Pancreas (tissue), 10 donors: ENCODE measurements at regions of chr1 and their contacts with region 1.

Region 1: DNA sequence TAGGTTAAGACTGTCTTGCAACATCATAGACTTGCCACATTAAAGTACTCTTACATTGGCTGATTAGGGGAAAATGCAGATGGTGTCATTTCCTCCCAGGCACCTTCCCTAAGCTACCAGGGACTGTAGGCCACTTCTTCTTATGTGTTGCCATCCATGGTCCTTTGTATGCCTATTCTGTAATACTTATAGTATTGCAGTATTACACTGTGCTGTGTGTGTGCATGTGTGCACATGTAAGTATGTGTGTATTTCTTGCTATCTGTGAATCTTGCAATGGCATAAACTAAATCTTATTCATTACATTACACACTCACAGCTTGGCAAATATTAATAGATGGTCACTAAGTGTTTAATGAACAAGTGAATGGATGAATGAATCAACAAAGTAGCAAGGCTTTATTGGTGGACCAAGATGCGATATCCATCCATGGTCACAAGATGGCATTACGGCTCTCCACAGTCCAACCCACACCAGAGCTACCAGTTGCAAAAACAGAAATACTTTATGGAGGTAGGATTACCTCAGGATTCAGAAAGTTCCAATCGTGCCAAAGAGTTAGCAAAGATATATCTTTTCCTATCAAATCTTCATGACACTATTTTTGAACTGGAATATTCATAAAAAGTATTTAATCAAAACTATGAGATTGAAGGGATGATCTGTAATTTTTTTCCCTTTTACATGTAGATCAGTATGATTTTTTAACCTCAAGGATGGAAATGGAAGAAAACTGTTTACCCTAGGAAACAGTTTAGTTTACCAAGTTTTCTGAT is 160.2 kb downstream of the DENND1B start:
- DNase-seq: peak in 2 of 6 donors; percentile 13 to 31
- ATAC-seq: peak; percentile 81 to 97 (median 94)
- H3K4me3 ChIP-seq: no peak overlapping the region
- H3K27ac ChIP-seq: no peak overlapping the region
- H3K4me1 ChIP-seq: peaks cover 0 to 7% (median 0%) of the 10 kb centered on the region in 3 donors
- H3K27me3 ChIP-seq: no peaks in the 10 kb centered on the region
- CTCF ChIP-seq: peak in 3 of 4 donors; percentile 25 to 38 (median 36)

Region 2: GRCh38 chr1:197541411-197541810 is 73.7 kb before region 1 on chr1:
- intact Hi-C with region 1: no loop called
- DNase-seq: no peak
- ATAC-seq: no peak
- H3K4me3 ChIP-seq: no peak overlapping the region
- H3K27ac ChIP-seq: no peak overlapping the region
- H3K4me1 ChIP-seq: no peaks in the 10 kb centered on the region
- H3K27me3 ChIP-seq: no peaks in the 10 kb centered on the region
- CTCF ChIP-seq: no peak

Region 3: DNA sequence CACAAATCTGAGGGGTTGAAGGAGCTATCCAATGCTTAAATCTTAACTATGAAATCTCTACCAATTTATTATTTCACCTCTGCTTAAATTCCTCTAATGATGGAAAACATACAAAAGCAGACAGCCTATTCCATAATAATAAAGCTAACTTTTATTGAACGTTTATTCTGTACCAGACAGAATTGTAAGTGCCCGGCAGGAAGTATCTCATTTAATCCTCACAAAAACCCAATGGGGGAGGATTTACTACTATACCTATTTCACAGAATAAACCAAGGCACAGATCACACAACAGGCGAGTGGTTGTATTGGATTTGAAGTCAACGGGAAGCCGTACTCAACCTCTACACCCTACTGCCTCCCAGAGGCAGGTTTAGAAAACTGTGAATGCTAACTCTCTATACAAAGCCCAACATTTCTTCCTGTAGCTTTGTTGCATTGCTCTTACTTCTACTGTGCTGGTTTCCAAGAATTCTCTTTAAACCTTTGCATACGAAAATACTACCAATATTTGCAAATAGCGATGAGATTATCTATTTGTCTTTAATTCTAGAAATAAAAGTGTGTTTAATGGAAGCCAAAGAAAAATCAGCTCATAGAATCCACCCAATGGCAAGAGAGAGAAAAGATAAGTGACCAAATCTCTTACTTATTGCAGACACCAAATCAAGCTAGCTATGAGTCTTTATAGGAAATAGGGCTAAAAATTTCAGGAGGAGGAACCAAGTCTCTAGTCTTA is 253.8 kb after region 1 on chr1:
- intact Hi-C with region 1: loop called in 2 of 3 experiments (anchors 10 kb)
- DNase-seq: peak in 3 of 6 donors; percentile 21 to 46 (median 30)
- ATAC-seq: peak; percentile 80 to 99 (median 96)
- H3K4me3 ChIP-seq: no peak overlapping the region
- H3K27ac ChIP-seq: no peak overlapping the region
- H3K4me1 ChIP-seq: no peaks in the 10 kb centered on the region
- H3K27me3 ChIP-seq: no peaks in the 10 kb centered on the region
- CTCF ChIP-seq: peak in 3 of 4 donors; percentile 32 to 51 (median 48)